ENCODE measurements at regions of chr12 and their contacts with region 1.

Region 1: DNA sequence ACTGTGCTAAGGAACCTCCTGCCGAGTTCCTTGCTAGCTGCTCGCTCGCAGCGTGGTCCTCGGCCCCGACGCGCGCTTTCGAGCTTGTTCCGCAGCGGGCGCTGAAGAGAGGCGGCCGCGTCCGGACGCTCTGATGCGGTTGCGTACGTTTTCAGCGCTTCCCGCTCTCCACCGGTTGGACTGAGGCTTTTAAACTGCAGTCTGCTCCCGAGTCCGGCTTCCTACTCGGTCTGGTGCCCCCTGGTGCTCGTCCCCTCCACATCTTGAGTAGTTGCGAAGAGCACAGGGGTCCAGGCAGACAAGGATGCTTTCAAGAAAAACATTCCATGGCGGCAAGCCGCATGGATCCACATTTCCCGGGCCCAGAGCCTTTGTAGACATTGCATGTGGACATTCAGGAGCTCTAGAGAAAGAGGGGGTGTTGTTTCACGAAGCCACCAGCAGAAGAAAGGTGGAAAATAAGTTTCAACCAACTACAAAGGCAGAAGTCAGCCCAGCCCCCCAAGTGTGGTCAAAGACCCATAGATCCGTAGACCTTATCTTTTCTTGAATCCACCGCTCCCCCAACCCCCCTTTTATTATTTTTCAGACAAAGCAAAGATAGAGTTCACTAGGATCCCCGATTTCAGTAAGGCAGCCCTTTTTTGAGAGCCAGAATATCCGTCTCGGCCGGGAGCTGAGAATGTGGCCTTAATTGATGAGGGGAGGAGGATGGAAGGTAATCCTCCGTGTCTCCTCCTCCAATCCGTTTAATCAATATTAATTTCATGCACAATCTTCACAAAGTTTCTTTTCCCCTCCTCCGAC is 984 bp upstream of the WNK1 start:
- DNase-seq: peak; percentile 79
- H3K4me3 ChIP-seq: peak overlapping the region; percentile 71 to 96 (median 83)
- H3K27ac ChIP-seq: peak overlapping the region; percentile 81 to 85
- H3K4me1 ChIP-seq: no peaks in the 10 kb centered on the region
- H3K27me3 ChIP-seq: no peaks in the 10 kb centered on the region
- CTCF ChIP-seq: peak; percentile 41 to 71 (median 58)
- POLR2A ChIP-seq: peak; percentile 40

Region 2: GRCh38 chr12:575948-576612 is 175.3 kb before region 1 on chr12:
- intact Hi-C with region 1: loop called (anchors 10 kb)
- DNase-seq: peak in 1 of 2 donors; percentile 65
- H3K4me3 ChIP-seq: peak overlapping the region in 2 of 3 donors; percentile 13 to 41
- H3K27ac ChIP-seq: peak overlapping the region; percentile 29 to 68
- H3K4me1 ChIP-seq: peaks cover 2 to 5% of the 10 kb centered on the region in 2 donors
- H3K27me3 ChIP-seq: no peaks in the 10 kb centered on the region
- CTCF ChIP-seq: peak; percentile 92 to 99 (median 99)
- POLR2A ChIP-seq: no peak

Measured in breast epithelium (tissue), 4 donors.